ENCODE measurements at regions of chr9 and their contacts with region 1.

Region 1: GRCh38 chr9:87324613-87325194 is 173.0 kb upstream of the DAPK1 start:
- DNase-seq: peak; percentile 62
- CTCF ChIP-seq: peak; percentile 70

Region 2: GRCh38 chr9:86434039-86434726 is 890.5 kb before region 1 on chr9:
- in situ Hi-C with region 1: loop called (anchors 25 kb)
- DNase-seq: peak; percentile 49
- CTCF ChIP-seq: peak; percentile 78

Region 3: GRCh38 chr9:86637515-86637914 is 687.2 kb before region 1 on chr9:
- in situ Hi-C with region 1: loop called (anchors 25 kb)
- DNase-seq: no peak
- CTCF ChIP-seq: peak; percentile 50

Region 4: DNA sequence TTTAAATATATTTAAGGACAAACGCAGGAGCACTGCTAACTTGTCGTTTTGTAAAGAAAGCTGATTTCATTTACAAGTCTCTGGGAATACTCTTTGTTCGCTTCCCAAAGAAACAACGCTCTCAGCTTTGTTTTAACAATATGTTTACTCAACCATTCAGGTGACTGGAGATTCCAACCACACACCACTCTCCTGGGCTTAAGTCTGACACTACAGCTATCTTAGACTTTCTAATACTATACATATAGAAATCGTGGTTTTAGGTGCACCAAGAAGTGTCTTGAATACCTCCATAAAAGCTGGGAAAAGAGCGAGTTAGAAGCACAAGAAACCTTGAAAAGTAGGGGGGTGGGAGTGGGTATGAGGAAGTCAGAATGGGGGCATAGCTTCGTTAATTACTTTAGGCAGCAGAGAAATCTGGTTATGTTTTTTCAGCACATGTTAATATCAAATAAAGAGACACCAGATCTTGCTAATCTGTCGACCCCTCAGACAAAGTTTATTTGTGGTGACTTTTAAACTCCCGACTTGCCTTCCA is 381.7 kb before region 1 on chr9:
- in situ Hi-C with region 1: no loop called
- DNase-seq: no peak
- CTCF ChIP-seq: no peak

Region 5: DNA sequence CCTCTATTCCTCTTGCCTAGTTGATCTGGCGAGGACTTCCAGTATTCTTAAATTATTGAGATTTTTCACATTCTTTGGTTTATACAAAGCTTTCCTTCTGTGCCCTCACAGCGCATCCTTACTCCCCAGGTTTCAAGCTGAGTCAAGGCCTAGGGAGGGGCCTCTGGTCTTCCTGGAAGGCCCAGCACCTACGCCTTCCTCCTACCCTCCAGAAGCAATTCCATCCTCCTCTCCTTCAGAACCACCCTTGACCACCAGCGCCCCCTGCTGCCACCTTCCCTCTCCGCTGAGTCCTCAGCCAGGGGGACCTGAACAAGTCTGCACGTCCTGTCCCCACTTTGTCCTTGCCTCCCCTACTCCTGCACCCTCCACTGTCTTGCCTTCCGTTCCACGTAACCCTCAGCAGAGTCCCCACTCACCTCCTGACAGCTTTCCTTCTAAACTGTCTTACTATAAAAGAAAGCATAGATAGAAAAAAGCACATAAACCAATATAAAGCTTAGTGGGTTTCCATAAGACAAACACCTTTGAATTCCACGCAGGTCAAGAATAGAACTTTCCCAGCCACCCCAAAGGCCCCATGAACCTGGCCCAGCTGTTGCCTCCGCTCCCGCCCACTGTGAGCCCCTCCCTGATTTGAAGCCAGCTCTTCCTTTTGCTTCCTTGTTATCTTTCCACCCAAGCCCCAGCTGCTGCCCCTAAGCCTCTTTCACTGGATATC is 338.3 kb after region 1 on chr9:
- in situ Hi-C with region 1: loop called (anchors 10 kb)
- DNase-seq: peak; percentile 64
- CTCF ChIP-seq: peak; percentile 75

Measured in GM13977 (cell line).